T-cell (primary cell): ENCODE measurements at regions of chr2 and their contacts with region 1.

Region 1: GRCh38 chr2:218395797-218396687 is 3.6 kb upstream of the CTDSP1 start:
- DNase-seq: peak; percentile 90 to 96 (median 93)
- ATAC-seq: peak; percentile 59 to 74 (median 66)
- H3K4me3 ChIP-seq: peak overlapping the region; percentile 84 to 98
- H3K4me3 Mint-ChIP-seq: peak overlapping the region; percentile 90 to 93 (median 92)
- H3K27ac ChIP-seq: peak overlapping the region; percentile 99
- H3K27ac Mint-ChIP-seq: peak overlapping the region; percentile 98 to 99
- H3K4me1 ChIP-seq: peaks cover 25 to 65% of the 10 kb centered on the region in 2 experiments
- H3K4me1 Mint-ChIP-seq: peaks cover 32 to 48% (median 39%) of the 10 kb centered on the region in 3 donors
- H3K27me3 ChIP-seq: no peaks in the 10 kb centered on the region
- H3K27me3 Mint-ChIP-seq: no peaks in the 10 kb centered on the region

Region 2: DNA sequence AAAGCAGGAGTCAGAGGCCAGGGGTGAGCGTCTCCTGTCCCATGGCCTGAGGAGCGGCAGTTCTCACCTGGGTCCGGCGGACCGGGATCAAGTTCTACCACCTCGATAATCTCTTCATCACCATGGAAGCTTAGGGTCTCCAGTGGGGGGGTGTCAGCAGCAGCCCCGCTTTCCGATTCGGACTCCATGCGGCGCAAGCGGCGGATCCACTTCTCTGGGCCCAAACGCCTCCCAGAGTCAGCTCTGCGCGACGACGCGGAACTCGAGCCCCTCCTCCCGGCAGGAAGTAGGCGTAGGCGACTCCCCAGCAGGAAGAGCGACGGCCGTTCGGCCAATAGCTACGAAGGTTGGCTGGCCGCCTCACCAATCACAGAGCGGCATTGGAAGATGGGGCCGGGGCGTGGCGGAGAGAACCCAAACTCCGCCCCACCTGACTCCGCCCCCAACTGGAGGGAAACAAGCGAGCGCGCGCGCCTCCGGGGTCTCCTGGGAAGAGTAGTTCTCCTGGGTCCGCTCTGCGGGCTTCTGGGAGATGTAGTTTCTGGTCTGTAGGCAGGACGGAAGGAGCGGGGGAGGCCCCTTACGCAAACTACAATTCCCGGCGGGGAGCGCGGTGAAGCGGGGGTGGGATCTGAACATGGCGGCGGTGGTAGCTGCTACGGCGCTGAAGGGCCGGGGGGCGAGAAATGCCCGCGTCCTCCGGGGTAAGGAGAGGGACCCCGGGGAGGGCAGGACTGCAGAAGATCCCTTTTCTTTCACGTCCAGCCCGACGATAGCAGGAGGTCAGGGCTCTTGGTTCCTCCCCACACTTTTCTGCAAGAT is 125.9 kb before region 1 on chr2 and contains the starts of genes AAMP and PNKD:
- CTCF ChIA-PET with region 1: interaction called, 8 to 11 read pairs
- POLR2A ChIA-PET with region 1: interaction called in 1 of 2 experiments, 3 read pairs
- DNase-seq: peak; percentile 99 to 100 (median 100)
- ATAC-seq: peak; percentile 90 to 94 (median 91)
- H3K4me3 ChIP-seq: peak within 1 kb of the TSS; percentile 80 to 96
- H3K4me3 Mint-ChIP-seq: peak within 1 kb of the TSS; percentile 92 to 95 (median 94)
- H3K27ac ChIP-seq: peak within 1 kb of the TSS; percentile 59
- H3K27ac Mint-ChIP-seq: peak within 1 kb of the TSS; percentile 87 to 92
- H3K4me1 ChIP-seq: peaks cover 18 to 48% of the 10 kb centered on the region in 2 experiments
- H3K4me1 Mint-ChIP-seq: peaks cover 47 to 61% (median 52%) of the 10 kb centered on the region in 3 donors
- H3K27me3 ChIP-seq: no peaks in the 10 kb centered on the region
- H3K27me3 Mint-ChIP-seq: no peaks in the 10 kb centered on the region
- total RNA-seq, gene AAMP: 46.2 to 71.3 (median 67.4) TPM
- total RNA-seq, gene PNKD: 17.4 to 33.1 (median 30.6) TPM

Region 3: DNA sequence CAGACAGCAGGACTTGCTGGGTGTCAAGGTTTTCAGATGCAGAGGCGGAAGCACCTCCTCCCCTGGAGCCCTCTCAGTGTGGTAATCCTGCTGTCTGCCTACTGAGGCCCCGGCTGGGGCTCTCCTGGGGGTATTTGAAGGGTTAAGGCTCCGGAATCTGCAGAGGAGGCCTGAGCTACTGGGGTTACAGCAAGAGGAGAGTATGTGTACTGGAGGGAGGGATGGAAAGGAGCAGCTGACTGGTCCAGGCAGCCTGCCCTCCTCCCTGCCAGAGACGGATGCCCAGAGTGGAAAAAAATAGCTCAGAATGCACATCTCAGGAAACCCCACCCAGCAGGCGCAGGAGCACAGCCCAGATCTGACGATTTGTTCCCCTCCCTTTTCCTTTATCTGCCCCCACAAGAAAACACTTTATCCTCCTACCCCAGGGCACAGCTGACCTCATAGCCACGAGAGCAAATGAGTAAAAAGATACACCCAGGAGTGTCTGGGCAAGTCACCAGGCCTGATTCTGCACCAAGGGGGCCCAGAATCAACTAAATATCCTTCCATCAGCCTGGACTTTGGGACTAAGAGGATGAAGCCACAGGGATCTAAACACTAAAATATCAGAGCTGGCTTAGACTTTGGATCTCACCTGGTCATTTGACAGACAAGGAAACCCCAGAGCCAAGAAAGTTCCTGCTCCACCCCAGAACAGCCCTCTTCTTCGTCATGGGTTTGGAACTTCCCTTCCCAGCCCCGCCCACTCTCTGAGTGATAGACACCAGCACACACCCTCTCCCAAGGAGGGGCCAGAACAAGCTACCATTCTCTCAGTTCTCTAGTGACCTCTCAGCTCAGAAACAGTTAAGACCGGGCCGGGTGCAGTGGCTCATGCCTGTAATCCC is 109.2 kb before region 1 on chr2:
- CTCF ChIA-PET with region 1: interaction called in 1 of 2 experiments, 21 read pairs
- POLR2A ChIA-PET with region 1: no interaction called
- DNase-seq: peak; percentile 52 to 94 (median 77)
- ATAC-seq: peak; percentile 70 to 80 (median 72)
- H3K4me3 ChIP-seq: peak overlapping the region; percentile 58 to 72
- H3K4me3 Mint-ChIP-seq: peak overlapping the region; percentile 88 to 91 (median 91)
- H3K27ac ChIP-seq: peak overlapping the region; percentile 99
- H3K27ac Mint-ChIP-seq: peak overlapping the region; percentile 100
- H3K4me1 ChIP-seq: peaks cover 57 to 100% of the 10 kb centered on the region in 2 experiments
- H3K4me1 Mint-ChIP-seq: peaks cover 77 to 86% (median 83%) of the 10 kb centered on the region in 3 donors
- H3K27me3 ChIP-seq: no peaks in the 10 kb centered on the region
- H3K27me3 Mint-ChIP-seq: no peaks in the 10 kb centered on the region

Region 4: GRCh38 chr2:218301176-218301819 is 94.7 kb before region 1 on chr2:
- CTCF ChIA-PET with region 1: interaction called, 5 to 14 read pairs
- POLR2A ChIA-PET with region 1: no interaction called
- DNase-seq: peak; percentile 67 to 93 (median 83)
- ATAC-seq: peak; percentile 92 to 95 (median 93)
- H3K4me3 ChIP-seq: no peak overlapping the region
- H3K4me3 Mint-ChIP-seq: no peak overlapping the region
- H3K27ac ChIP-seq: no peak overlapping the region
- H3K27ac Mint-ChIP-seq: peak overlapping the region; percentile 66 to 68
- H3K4me1 ChIP-seq: peaks cover 0 to 7% of the 10 kb centered on the region in 2 experiments
- H3K4me1 Mint-ChIP-seq: peaks cover 6% of the 10 kb centered on the region in 3 donors
- H3K27me3 ChIP-seq: no peaks in the 10 kb centered on the region
- H3K27me3 Mint-ChIP-seq: no peaks in the 10 kb centered on the region

Region 5: DNA sequence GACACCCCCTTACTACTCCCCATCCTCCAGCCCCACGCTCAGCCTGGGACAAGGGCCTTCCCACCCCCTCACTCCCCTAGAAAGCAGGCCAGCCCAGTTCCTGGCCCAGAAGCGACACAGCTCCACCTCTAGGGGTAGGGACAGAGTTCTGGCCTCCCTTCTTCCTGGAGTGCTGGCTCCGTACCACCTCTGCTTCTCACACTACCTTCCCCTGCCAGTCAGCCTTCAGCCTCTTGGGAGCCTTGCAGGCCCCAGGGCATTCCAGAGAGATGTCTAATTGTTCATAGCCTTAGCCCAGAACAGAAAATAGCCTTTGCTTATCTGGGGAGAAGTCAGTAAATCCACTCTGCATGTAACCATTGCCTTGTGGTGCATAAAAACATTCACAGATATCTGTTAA is 52.5 kb before region 1 on chr2:
- CTCF ChIA-PET with region 1: no interaction called
- POLR2A ChIA-PET with region 1: no interaction called
- DNase-seq: no peak
- ATAC-seq: no peak
- H3K4me3 ChIP-seq: no peak overlapping the region
- H3K4me3 Mint-ChIP-seq: no peak overlapping the region
- H3K27ac ChIP-seq: no peak overlapping the region
- H3K27ac Mint-ChIP-seq: no peak overlapping the region
- H3K4me1 ChIP-seq: no peaks in the 10 kb centered on the region
- H3K4me1 Mint-ChIP-seq: no peaks in the 10 kb centered on the region
- H3K27me3 ChIP-seq: peaks cover 0 to 6% of the 10 kb centered on the region in 2 experiments
- H3K27me3 Mint-ChIP-seq: no peaks in the 10 kb centered on the region

Region 6: GRCh38 chr2:218357236-218358159 is 38.5 kb before region 1 on chr2:
- CTCF ChIA-PET with region 1: interaction called, 3 to 11 read pairs
- POLR2A ChIA-PET with region 1: no interaction called
- DNase-seq: no peak
- ATAC-seq: no peak
- H3K4me3 ChIP-seq: no peak overlapping the region
- H3K4me3 Mint-ChIP-seq: no peak overlapping the region
- H3K27ac ChIP-seq: no peak overlapping the region
- H3K27ac Mint-ChIP-seq: no peak overlapping the region
- H3K4me1 ChIP-seq: peaks cover 0 to 8% of the 10 kb centered on the region in 2 experiments
- H3K4me1 Mint-ChIP-seq: peaks cover 0 to 4% (median 2%) of the 10 kb centered on the region in 3 donors
- H3K27me3 ChIP-seq: peaks cover 0 to 7% of the 10 kb centered on the region in 2 experiments
- H3K27me3 Mint-ChIP-seq: no peaks in the 10 kb centered on the region

Region 7: DNA sequence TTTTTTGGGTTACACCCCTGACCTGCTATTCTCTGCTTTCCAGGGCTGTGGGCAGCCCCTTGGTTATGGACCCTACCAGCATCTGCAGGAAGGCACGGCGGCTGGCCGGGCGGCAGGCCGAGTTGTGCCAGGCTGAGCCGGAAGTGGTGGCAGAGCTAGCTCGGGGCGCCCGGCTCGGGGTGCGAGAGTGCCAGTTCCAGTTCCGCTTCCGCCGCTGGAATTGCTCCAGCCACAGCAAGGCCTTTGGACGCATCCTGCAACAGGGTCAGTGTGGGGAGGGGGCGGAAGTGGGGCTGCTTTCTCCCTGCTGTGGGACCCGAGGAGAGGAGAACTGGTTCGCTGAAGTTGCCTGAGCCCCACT is 474.9 kb after region 1 on chr2:
- CTCF ChIA-PET with region 1: no interaction called
- POLR2A ChIA-PET with region 1: no interaction called
- DNase-seq: no peak
- ATAC-seq: peak in 1 of 4 experiments; percentile 16
- H3K4me3 ChIP-seq: peak overlapping the region in 1 of 2 donors; percentile 46
- H3K4me3 Mint-ChIP-seq: peak overlapping the region; percentile 63 to 79 (median 65)
- H3K27ac ChIP-seq: no peak overlapping the region
- H3K27ac Mint-ChIP-seq: no peak overlapping the region
- H3K4me1 ChIP-seq: peaks cover 2 to 34% of the 10 kb centered on the region in 2 experiments
- H3K4me1 Mint-ChIP-seq: peaks cover 21 to 30% (median 23%) of the 10 kb centered on the region in 3 donors
- H3K27me3 ChIP-seq: peaks cover 10 to 71% of the 10 kb centered on the region in 2 experiments
- H3K27me3 Mint-ChIP-seq: peaks cover 29 to 50% of the 10 kb centered on the region in 2 donors